K562 (cell line): ENCODE measurements at regions of chr16 and their contacts with region 1.

Region 1: GRCh38 chr16:75148311-75149195 is at the start of gene ZFP1:
- DNase-seq: peak; percentile 94 to 97 (median 95)
- ATAC-seq: peak; percentile 94
- H3K4me3 ChIP-seq: peak within 1 kb of the TSS; percentile 97
- H3K27ac ChIP-seq: peak within 1 kb of the TSS; percentile 97
- H3K4me1 ChIP-seq: peaks cover 0 to 14% of the 10 kb centered on the region in 2 experiments; a peak in 3 of 5 replicates
- H3K27me3 ChIP-seq: no peaks in the 10 kb centered on the region
- CTCF ChIP-seq: no peak
- EP300 ChIP-seq: no peak
- POLR2A ChIP-seq: peak; percentile 83
- RAD21 ChIP-seq: no peak
- polyA plus RNA-seq, gene ZFP1: 2.6 to 4.1 TPM

Region 2: GRCh38 chr16:74936902-74937560 is 211.5 kb before region 1 on chr16:
- CTCF ChIA-PET with region 1: no interaction called
- POLR2A ChIA-PET with region 1: no interaction called
- in situ Hi-C with region 1: no loop called
- intact Hi-C with region 1: no loop called
- DNase-seq: no peak
- ATAC-seq: no peak
- H3K4me3 ChIP-seq: no peak overlapping the region
- H3K27ac ChIP-seq: no peak overlapping the region
- H3K4me1 ChIP-seq: no peaks in the 10 kb centered on the region
- H3K27me3 ChIP-seq: no peaks in the 10 kb centered on the region
- CTCF ChIP-seq: 0 out of 6 replicates have a peak, but pooled peaks of 1 of the 3 experiments have one; percentile 23
- EP300 ChIP-seq: no peak
- POLR2A ChIP-seq: no peak
- RAD21 ChIP-seq: 0 out of 4 replicates have a peak, but pooled peaks of 1 of the 2 experiments have one; percentile 26

Region 3: GRCh38 chr16:75087375-75087979 is 61.1 kb before region 1 on chr16:
- CTCF ChIA-PET with region 1: no interaction called
- POLR2A ChIA-PET with region 1: no interaction called
- in situ Hi-C with region 1: no loop called
- intact Hi-C with region 1: no loop called
- DNase-seq: peak; percentile 45 to 85 (median 62)
- ATAC-seq: peak; percentile 95
- H3K4me3 ChIP-seq: no peak overlapping the region
- H3K27ac ChIP-seq: peak overlapping the region; percentile 77
- H3K4me1 ChIP-seq: peaks cover 28 to 62% of the 10 kb centered on the region in 2 experiments
- H3K27me3 ChIP-seq: no peaks in the 10 kb centered on the region
- CTCF ChIP-seq: peak; percentile 36 to 57 (median 49); a peak in 4 of 6 replicates
- EP300 ChIP-seq: peak; percentile 53; the same call in 1 of the 2 replicates
- POLR2A ChIP-seq: no peak
- RAD21 ChIP-seq: peak; percentile 35 to 54; a peak in 3 of 4 replicates

Region 4: GRCh38 chr16:75181630-75182029 is 33.1 kb after region 1 on chr16:
- CTCF ChIA-PET with region 1: no interaction called
- POLR2A ChIA-PET with region 1: no interaction called
- in situ Hi-C with region 1: no loop called
- intact Hi-C with region 1: loop called (anchors 5 kb)
- DNase-seq: peak in 1 of 4 experiments; percentile 38
- ATAC-seq: peak; percentile 68
- H3K4me3 ChIP-seq: no peak overlapping the region
- H3K27ac ChIP-seq: no peak overlapping the region
- H3K4me1 ChIP-seq: no peaks in the 10 kb centered on the region; a peak in 1 of 5 replicates
- H3K27me3 ChIP-seq: no peaks in the 10 kb centered on the region
- CTCF ChIP-seq: no peak
- EP300 ChIP-seq: no peak
- POLR2A ChIP-seq: no peak
- RAD21 ChIP-seq: no peak

Region 5: GRCh38 chr16:75555707-75556430 is 407.3 kb after region 1 on chr16 and contains the start of gene TMEM231:
- CTCF ChIA-PET with region 1: no interaction called
- POLR2A ChIA-PET with region 1: no interaction called
- in situ Hi-C with region 1: no loop called
- intact Hi-C with region 1: no loop called
- DNase-seq: peak; percentile 95 to 97 (median 97)
- ATAC-seq: peak; percentile 92
- H3K4me3 ChIP-seq: peak within 1 kb of the TSS; percentile 64
- H3K27ac ChIP-seq: peak within 1 kb of the TSS; percentile 66
- H3K4me1 ChIP-seq: peaks cover 17 to 26% of the 10 kb centered on the region in 2 experiments
- H3K27me3 ChIP-seq: no peaks in the 10 kb centered on the region
- CTCF ChIP-seq: no peak
- EP300 ChIP-seq: no peak; the same call in 1 of the 2 replicates
- POLR2A ChIP-seq: peak; percentile 55
- RAD21 ChIP-seq: no peak
- polyA plus RNA-seq, gene TMEM231: 1.6 to 2.8 TPM